Aorta (tissue), 5 donors: ENCODE measurements at regions of chr1 and their contacts with region 1.

Region 1: GRCh38 chr1:192477630-192478029 is 97.9 kb upstream of the RGS1 start:
- DNase-seq: no peak
- ATAC-seq: peak; percentile 74
- H3K4me3 ChIP-seq: no peak overlapping the region
- H3K27ac ChIP-seq: no peak overlapping the region
- H3K4me1 ChIP-seq: no peaks in the 10 kb centered on the region
- H3K27me3 ChIP-seq: no peaks in the 10 kb centered on the region

Region 2: DNA sequence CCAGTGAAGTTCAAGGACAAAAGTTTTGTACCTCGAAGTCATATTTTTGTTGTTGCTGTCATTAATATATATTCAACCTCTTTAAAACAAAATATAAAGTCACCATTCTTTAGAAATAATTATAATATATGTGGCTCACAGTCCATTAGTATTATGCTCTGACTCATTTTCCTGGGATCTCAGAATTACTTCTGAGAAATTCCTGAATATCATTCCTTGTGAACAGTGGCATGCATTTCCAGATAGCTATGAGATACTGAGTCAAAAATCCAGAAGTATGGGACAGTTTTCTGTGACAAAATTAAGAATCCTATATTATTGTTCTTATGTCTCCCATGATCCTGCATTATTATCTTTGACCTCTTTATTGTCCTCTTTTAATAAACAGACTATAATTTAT is 174.6 kb before region 1 on chr1:
- intact Hi-C with region 1: no loop called
- DNase-seq: no peak
- ATAC-seq: no peak
- H3K4me3 ChIP-seq: no peak overlapping the region
- H3K27ac ChIP-seq: no peak overlapping the region
- H3K4me1 ChIP-seq: no peaks in the 10 kb centered on the region
- H3K27me3 ChIP-seq: no peaks in the 10 kb centered on the region

Region 3: GRCh38 chr1:192580351-192580962 is 102.8 kb after region 1 on chr1:
- intact Hi-C with region 1: loop called (anchors 1 to 2 kb)
- DNase-seq: no peak
- ATAC-seq: peak; percentile 80
- H3K4me3 ChIP-seq: no peak overlapping the region
- H3K27ac ChIP-seq: no peak overlapping the region
- H3K4me1 ChIP-seq: peaks cover 0 to 1% of the 10 kb centered on the region in 2 donors
- H3K27me3 ChIP-seq: no peaks in the 10 kb centered on the region

Region 4: DNA sequence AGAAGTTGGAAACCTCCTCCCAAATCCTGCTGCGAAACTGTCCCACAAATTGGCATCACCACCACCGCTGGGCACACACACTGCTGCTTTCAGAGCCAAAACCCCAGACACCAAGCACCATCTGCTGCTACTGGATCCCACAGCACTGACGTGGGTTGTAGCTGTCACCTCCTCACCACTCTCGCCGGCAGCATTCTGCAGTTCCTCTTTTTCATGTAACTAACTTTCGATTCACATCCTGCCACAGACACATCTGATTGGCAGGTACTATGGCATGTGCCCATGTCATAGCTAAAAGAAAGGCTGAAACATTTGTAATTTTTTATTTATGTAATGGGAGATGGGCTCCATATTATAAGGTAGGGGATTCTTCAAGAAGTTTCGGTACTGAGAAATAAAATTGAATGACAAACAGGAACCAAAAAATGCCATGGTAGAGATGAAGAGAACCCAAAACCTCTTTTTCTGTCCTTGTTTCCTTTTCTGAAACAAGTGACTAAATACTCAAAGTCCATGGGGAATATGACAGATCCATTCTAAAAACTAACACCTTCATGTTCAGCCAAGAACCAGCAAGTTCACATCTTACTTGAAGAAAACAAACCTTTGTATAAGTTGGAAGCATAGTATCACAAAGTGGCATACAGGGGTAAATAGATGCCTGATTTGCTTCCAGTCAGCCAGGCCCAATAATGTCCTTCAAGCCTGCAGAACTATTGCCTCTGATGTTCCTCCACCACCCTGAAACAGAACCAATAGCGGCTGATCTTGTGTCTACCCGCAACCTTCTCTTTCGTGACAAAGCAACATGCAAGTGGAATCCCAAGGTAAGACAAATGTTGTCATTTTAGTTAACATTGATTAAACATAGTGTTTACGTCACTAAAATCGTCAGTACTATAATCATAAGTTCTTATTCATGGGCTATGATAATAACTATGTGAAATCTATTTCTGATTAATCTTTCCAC is 131.8 kb after region 1 on chr1:
- intact Hi-C with region 1: loop called (anchors 2 to 5 kb)
- DNase-seq: peak; percentile 60 to 83
- ATAC-seq: peak; percentile 60
- H3K4me3 ChIP-seq: no peak overlapping the region
- H3K27ac ChIP-seq: no peak overlapping the region
- H3K4me1 ChIP-seq: no peaks in the 10 kb centered on the region
- H3K27me3 ChIP-seq: no peaks in the 10 kb centered on the region

Region 5: GRCh38 chr1:192787914-192788585 is 310.4 kb after region 1 on chr1:
- intact Hi-C with region 1: no loop called
- DNase-seq: peak in 1 of 2 donors; percentile 54
- ATAC-seq: peak; percentile 64
- H3K4me3 ChIP-seq: no peak overlapping the region
- H3K27ac ChIP-seq: no peak overlapping the region
- H3K4me1 ChIP-seq: no peaks in the 10 kb centered on the region
- H3K27me3 ChIP-seq: no peaks in the 10 kb centered on the region

Region 6: DNA sequence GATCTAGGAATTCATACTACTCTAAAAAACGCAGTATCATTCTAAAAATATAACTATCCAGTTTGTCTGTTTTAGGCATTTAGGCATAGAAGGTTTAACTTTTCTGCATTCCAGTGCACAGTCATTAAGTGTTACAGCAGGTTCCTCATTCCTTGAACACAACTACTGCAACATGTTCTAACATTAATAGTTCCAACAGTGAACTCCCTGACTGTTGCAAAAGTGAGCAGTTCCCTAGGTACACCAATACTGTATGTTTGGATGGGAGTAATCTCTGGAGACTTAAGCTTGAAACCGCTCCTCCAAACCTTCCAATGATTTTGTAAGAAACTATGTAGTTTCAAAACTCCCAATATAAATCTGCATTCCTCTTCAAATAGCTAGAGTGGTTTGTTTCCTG is 535.4 kb after region 1 on chr1:
- intact Hi-C with region 1: loop called (anchors 5 kb)
- DNase-seq: no peak
- ATAC-seq: no peak
- H3K4me3 ChIP-seq: no peak overlapping the region
- H3K27ac ChIP-seq: no peak overlapping the region
- H3K4me1 ChIP-seq: peaks cover 0 to 3% of the 10 kb centered on the region in 2 donors
- H3K27me3 ChIP-seq: no peaks in the 10 kb centered on the region

Region 7: GRCh38 chr1:193019442-193020026 is 541.9 kb after region 1 on chr1:
- intact Hi-C with region 1: loop called (anchors 5 kb)
- DNase-seq: no peak
- ATAC-seq: no peak
- H3K4me3 ChIP-seq: no peak overlapping the region
- H3K27ac ChIP-seq: no peak overlapping the region
- H3K4me1 ChIP-seq: no peaks in the 10 kb centered on the region
- H3K27me3 ChIP-seq: no peaks in the 10 kb centered on the region